Ovary (tissue), 10 donors: ENCODE measurements at regions of chr9 and their contacts with region 1.

Region 1: DNA sequence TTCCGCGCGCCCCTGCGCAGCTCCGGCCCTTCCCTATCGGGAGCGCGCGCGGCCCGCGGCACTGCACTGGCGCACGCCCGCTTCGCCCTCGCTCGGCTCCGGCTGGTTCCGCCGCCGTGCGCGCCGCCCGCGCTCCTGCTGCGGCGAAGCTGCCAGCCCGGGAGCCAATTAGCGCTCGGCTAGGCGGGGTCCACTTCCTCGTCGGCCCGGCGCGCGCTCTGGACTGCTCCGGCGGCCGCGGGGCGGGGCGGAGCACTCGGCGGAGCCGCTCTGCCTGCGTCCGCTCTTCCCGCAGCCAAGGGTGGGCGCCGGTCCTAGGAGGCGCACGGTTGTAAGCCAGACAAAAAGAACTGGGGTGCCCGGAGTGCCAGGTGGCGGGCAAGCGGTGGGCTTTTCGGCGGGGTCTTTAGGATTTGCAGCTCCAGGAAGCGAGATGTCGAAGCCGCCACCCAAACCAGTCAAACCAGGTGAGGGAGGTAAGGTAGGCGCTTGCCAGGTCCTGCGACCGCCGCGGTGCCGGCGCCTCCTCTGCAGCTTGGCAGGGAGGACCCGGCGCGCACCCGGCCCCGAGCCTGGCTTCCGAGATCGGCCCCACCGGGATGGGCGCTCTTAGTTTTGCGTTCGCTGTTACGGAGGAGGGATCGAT is at the start of gene OSTF1:
- DNase-seq: peak; percentile 94 to 97 (median 95)
- H3K4me3 ChIP-seq: peak within 1 kb of the TSS; percentile 94
- H3K27ac ChIP-seq: peak within 1 kb of the TSS; percentile 86 to 97
- H3K4me1 ChIP-seq: peaks cover 13% of the 10 kb centered on the region
- H3K27me3 ChIP-seq: no peaks in the 10 kb centered on the region
- CTCF ChIP-seq: no peak
- EP300 ChIP-seq: no peak
- POLR2A ChIP-seq: peak; percentile 84
- total RNA-seq, gene OSTF1: 15.1 to 46.9 (median 20.0) TPM

Region 2: GRCh38 chr9:74952281-74953151 is 135.9 kb before region 1 on chr9 and contains the start of gene C9orf40:
- intact Hi-C with region 1: loop called in 1 of 4 experiments (anchors 10 kb)
- DNase-seq: peak; percentile 86 to 92 (median 90)
- H3K4me3 ChIP-seq: peak within 1 kb of the TSS; percentile 81
- H3K27ac ChIP-seq: peak within 1 kb of the TSS; percentile 74 to 93
- H3K4me1 ChIP-seq: peaks cover 1% of the 10 kb centered on the region
- H3K27me3 ChIP-seq: no peaks in the 10 kb centered on the region
- CTCF ChIP-seq: peak; percentile 82 to 88 (median 84)
- EP300 ChIP-seq: no peak
- POLR2A ChIP-seq: peak; percentile 34
- total RNA-seq, gene C9orf40: 2.9 to 4.9 (median 3.9) TPM